Mammary epithelial cell (primary cell): ENCODE measurements at regions of chr19 and their contacts with region 1.

Region 1: GRCh38 chr19:4821265-4821664 is 10.2 kb downstream of the TICAM1 start:
- DNase-seq: no peak
- H3K4me3 ChIP-seq: no peak overlapping the region
- H3K27ac ChIP-seq: no peak overlapping the region
- H3K4me1 ChIP-seq: no peaks in the 10 kb centered on the region
- H3K27me3 ChIP-seq: no peaks in the 10 kb centered on the region
- CTCF ChIP-seq: no peak

Region 2: DNA sequence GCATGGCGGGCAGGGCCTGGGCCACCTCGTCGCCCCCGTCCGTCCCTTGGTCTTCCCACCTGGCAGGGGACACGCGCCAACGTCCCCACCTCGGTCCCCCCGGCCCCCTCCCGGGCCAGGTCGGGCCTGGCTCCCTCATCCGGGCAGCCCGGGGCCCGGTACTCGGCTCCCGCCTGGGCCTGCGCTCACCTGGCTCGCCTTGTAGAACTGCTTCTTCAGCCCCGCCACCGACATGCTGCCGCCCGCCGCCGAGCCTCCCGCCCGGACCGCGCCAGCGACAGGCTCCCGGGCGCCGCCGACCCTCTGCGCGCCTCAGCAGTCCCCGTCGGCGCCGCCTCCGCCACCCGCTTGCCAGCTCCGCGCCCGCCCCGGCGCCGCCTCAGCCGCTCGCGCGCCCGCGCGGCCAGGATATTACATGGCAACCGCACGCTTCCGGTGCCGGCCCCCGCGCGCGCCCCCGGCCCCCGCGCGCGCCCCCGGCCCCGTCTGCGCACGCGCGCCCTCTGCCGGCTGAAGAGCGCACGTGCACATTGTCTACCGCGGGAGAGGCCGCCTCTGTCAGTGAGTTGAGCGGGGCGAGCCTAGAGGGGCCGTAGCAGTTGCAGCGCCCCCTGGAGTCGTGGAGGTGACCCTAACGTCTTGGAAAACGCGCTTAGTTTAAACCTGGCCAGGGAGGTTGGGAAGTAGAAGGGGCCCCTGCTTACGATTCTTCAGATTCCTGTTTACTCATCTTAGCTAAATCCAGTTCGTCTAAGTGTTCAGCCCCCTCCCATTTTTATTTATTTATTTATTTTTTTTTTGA is 420.9 kb before region 1 on chr19 and contains the start of gene SH3GL1:
- CTCF ChIA-PET with region 1: interaction called, 18 read pairs
- dilution Hi-C with region 1: no loop called
- in situ Hi-C with region 1: no loop called
- intact Hi-C with region 1: no loop called
- DNase-seq: peak; percentile 75
- H3K4me3 ChIP-seq: peak within 1 kb of the TSS; percentile 75 to 96 (median 87)
- H3K27ac ChIP-seq: peak within 1 kb of the TSS; percentile 95
- H3K4me1 ChIP-seq: peaks cover 19% of the 10 kb centered on the region
- H3K27me3 ChIP-seq: no peaks in the 10 kb centered on the region
- CTCF ChIP-seq: peak; percentile 91 to 98
- total RNA-seq, gene SH3GL1: 80.5 to 149 TPM